CD4-positive, alpha-beta memory T cell (primary cell): ENCODE measurements at regions of chr5 and their contacts with region 1.

Region 1: DNA sequence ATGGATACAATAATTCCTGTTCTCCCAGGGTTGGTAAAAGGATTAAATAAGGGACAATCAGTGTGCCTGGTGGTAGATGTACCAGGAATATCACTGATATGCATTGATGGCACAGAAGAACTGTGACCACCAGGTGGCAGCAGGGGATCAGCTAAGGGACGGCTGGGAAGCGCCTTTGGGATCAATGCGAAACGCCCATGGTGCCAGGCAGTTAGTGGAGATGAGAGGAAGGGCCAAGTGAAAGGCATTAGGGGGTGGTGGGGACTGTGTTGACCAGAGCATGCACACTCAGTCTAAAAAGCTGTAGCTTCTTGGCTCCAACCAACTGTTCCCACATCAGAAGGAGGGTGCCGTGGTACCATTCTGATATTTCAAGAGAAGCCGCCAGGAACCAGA is 55.6 kb downstream of the ARHGEF37 start:
- DNase-seq: peak; percentile 39 to 65 (median 52)
- H3K4me3 ChIP-seq: no peak overlapping the region
- H3K4me3 Mint-ChIP-seq: no peak overlapping the region
- H3K27ac ChIP-seq: no peak overlapping the region
- H3K27ac Mint-ChIP-seq: no peak overlapping the region
- H3K4me1 ChIP-seq: no peaks in the 10 kb centered on the region
- H3K4me1 Mint-ChIP-seq: peaks cover 0 to 4% (median 1%) of the 10 kb centered on the region in 4 donors
- H3K27me3 ChIP-seq: peaks cover 5% of the 10 kb centered on the region
- H3K27me3 Mint-ChIP-seq: peaks cover 0 to under 1% of the 10 kb centered on the region in 2 donors

Region 2: DNA sequence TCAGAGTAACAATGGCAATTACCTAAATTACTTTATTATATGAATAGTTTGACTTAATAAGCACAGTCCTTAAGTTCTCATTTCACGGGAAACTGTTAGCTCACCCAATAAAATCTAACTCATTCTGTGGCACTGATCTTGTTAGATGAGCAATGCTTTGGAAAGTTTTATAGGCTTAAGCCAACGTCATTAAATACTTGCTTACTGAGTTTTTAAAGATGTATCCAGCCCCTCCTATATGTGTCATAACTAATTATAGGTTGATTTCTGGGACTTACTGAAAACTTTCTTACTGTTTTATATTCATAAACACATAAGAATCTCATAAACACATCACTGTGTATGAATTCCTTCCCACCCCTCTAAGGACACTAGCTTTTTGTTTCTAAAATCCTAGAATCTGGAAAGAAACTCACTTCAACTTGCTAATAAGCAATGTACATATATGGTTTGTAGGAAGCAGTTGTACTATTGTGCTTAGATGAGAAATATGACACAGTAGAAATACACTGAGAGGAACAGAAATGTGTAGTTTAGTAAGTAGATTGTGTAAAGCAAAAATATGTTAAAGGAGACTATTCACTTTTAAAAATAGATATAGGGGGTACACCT is 1412.6 kb before region 1 on chr5:
- CTCF ChIA-PET with region 1: no interaction called
- POLR2A ChIA-PET with region 1: no interaction called
- intact Hi-C with region 1: no loop called
- DNase-seq: no peak
- H3K4me3 ChIP-seq: no peak overlapping the region
- H3K4me3 Mint-ChIP-seq: no peak overlapping the region
- H3K27ac ChIP-seq: no peak overlapping the region
- H3K27ac Mint-ChIP-seq: peak overlapping the region in 1 of 7 donors; percentile 49
- H3K4me1 ChIP-seq: no peaks in the 10 kb centered on the region
- H3K4me1 Mint-ChIP-seq: no peaks in the 10 kb centered on the region
- H3K27me3 ChIP-seq: no peaks in the 10 kb centered on the region
- H3K27me3 Mint-ChIP-seq: peaks cover 4% of the 10 kb centered on the region in 2 donors

Region 3: DNA sequence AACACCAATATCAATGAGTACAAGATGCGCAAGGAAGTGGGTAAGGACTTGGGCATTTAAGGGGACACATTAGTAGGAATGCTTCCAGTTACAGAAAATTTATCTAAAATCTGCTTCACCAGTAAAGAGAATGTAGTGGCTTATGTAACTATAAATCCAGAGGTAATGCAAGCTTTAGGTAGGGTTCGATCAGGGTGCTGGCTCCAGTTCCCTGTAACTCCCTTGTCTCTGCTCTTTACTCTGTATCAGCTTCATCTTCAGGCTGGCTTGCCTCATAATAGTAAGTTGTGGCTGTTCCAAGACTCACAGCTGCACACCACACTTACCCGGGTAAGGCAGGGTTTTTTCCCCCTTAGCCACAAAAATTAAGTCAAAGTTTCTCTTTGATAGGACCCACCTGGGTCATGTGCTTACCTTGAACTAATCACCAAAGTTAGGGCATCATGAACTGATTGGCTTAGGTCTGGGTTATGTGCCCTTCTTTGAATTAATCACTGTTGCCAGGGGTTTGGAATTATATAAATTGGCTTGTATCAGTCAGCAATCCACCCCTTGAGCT is 20.0 kb before region 1 on chr5:
- CTCF ChIA-PET with region 1: no interaction called
- POLR2A ChIA-PET with region 1: no interaction called
- intact Hi-C with region 1: no loop called
- DNase-seq: no peak
- H3K4me3 ChIP-seq: no peak overlapping the region
- H3K4me3 Mint-ChIP-seq: no peak overlapping the region
- H3K27ac ChIP-seq: no peak overlapping the region
- H3K27ac Mint-ChIP-seq: peak overlapping the region in 1 of 7 donors; percentile 5
- H3K4me1 ChIP-seq: no peaks in the 10 kb centered on the region
- H3K4me1 Mint-ChIP-seq: no peaks in the 10 kb centered on the region
- H3K27me3 ChIP-seq: no peaks in the 10 kb centered on the region
- H3K27me3 Mint-ChIP-seq: no peaks in the 10 kb centered on the region

Region 4: GRCh38 chr5:149852641-149853330 is 215.9 kb after region 1 on chr5:
- CTCF ChIA-PET with region 1: interaction called, 11 read pairs
- POLR2A ChIA-PET with region 1: no interaction called
- intact Hi-C with region 1: loop called (anchors 1 kb)
- DNase-seq: peak in 3 of 5 donors; percentile 10 to 19 (median 12)
- H3K4me3 ChIP-seq: no peak overlapping the region
- H3K4me3 Mint-ChIP-seq: no peak overlapping the region
- H3K27ac ChIP-seq: no peak overlapping the region
- H3K27ac Mint-ChIP-seq: no peak overlapping the region
- H3K4me1 ChIP-seq: no peaks in the 10 kb centered on the region
- H3K4me1 Mint-ChIP-seq: no peaks in the 10 kb centered on the region
- H3K27me3 ChIP-seq: no peaks in the 10 kb centered on the region
- H3K27me3 Mint-ChIP-seq: no peaks in the 10 kb centered on the region